Esophagus muscularis mucosa (tissue), 4 donors: ENCODE measurements at regions of chr17 and their contacts with region 1.

Region 1: DNA sequence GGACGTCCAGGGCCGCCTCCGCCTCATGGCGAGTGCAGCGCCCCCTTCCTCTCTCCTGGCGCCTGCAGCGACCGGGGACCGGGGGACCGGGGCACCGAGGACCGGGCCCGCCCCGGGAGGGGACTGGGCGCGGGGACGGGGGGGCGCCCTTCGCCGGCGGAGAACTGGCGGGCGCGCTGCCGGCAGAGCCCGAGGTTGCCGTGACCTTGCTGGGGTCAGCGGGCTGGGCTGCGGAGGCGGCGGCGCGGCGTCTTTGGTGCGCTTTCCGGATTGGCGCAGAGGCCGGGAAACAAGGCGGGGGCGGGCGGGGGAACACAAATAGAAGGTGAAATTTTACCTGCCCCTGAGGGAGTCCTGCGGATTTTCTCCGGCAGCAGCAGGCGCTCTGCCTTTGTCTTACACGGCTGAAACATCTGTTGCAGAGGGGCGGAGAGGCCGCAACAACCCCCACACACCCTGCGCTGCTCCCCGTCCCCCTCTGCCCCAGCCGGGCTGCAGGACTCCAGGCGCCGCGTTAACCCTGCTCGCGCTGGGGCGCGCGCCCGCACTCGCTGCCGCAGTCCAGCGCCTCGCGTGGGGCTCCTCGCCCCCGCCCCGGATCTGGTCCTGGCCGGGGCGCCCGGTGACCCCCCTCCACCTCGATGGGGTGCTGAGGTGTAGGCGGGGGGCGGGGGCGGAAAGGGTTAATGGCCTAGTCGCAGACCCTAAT is 53.5 kb downstream of the SREBF1 start:
- DNase-seq: no peak
- H3K4me3 ChIP-seq: peak overlapping the region; percentile 54 to 64 (median 61)
- H3K27ac ChIP-seq: peak overlapping the region; percentile 83 to 94 (median 92)
- H3K4me1 ChIP-seq: peaks cover 71 to 84% (median 80%) of the 10 kb centered on the region in 4 donors
- H3K27me3 ChIP-seq: no peaks in the 10 kb centered on the region
- CTCF ChIP-seq: peak in 2 of 3 experiments; percentile 22 to 23
- EP300 ChIP-seq: no peak
- POLR2A ChIP-seq: peak; percentile 3

Region 2: GRCh38 chr17:17041571-17042380 is 741.5 kb before region 1 on chr17:
- intact Hi-C with region 1: no loop called
- DNase-seq: peak; percentile 99
- H3K4me3 ChIP-seq: peak overlapping the region; percentile 59 to 85 (median 75)
- H3K27ac ChIP-seq: peak overlapping the region; percentile 76 to 80 (median 79)
- H3K4me1 ChIP-seq: peaks cover 36 to 50% (median 45%) of the 10 kb centered on the region in 4 donors
- H3K27me3 ChIP-seq: no peaks in the 10 kb centered on the region
- CTCF ChIP-seq: no peak
- EP300 ChIP-seq: no peak
- POLR2A ChIP-seq: no peak

Region 3: DNA sequence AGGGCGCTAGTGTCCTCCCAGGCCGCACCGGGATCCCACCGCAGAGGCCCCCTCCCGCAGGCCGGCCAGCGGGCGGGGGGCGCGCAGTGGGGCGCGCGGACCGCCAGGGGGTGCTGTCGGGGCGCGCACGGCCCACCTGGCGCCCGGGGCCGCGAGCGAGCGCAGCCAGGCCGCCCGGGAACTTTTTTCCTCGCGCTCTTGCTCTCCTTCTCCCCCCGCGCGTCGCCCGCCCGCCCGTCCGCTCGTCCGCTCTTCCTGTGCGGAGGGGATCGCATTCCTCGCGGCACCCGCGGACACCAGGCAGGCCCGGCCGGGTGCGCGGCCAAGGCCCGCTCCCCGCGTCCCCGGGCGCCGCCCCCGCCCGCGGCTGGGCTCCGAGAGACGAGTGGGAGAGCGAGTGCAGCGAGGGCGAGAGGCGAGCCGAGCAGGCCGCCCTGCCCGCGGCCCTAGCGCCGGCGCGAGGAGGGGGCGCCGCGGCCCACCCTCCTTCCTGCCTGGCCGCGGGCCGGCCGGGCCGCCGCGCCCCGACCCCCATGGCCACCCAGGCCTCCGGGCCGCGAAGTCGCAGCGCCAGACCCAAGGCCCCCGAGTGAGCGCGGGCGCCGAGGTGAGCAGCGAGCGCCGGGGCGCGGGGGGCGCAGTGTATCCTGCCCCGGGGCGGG is 102.0 kb before region 1 on chr17 and contains the start of gene RAI1:
- intact Hi-C with region 1: loop called (anchors 5 kb)
- DNase-seq: no peak
- H3K4me3 ChIP-seq: peak within 1 kb of the TSS; percentile 71 to 86 (median 84)
- H3K27ac ChIP-seq: peak within 1 kb of the TSS; percentile 96 to 99 (median 98)
- H3K4me1 ChIP-seq: peaks cover 29 to 49% (median 38%) of the 10 kb centered on the region in 4 donors
- H3K27me3 ChIP-seq: no peaks in the 10 kb centered on the region
- CTCF ChIP-seq: peak; percentile 77 to 99 (median 94)
- EP300 ChIP-seq: no peak
- POLR2A ChIP-seq: no peak
- total RNA-seq, gene RAI1: 18.7 to 41.3 (median 28.3) TPM

Region 4: DNA sequence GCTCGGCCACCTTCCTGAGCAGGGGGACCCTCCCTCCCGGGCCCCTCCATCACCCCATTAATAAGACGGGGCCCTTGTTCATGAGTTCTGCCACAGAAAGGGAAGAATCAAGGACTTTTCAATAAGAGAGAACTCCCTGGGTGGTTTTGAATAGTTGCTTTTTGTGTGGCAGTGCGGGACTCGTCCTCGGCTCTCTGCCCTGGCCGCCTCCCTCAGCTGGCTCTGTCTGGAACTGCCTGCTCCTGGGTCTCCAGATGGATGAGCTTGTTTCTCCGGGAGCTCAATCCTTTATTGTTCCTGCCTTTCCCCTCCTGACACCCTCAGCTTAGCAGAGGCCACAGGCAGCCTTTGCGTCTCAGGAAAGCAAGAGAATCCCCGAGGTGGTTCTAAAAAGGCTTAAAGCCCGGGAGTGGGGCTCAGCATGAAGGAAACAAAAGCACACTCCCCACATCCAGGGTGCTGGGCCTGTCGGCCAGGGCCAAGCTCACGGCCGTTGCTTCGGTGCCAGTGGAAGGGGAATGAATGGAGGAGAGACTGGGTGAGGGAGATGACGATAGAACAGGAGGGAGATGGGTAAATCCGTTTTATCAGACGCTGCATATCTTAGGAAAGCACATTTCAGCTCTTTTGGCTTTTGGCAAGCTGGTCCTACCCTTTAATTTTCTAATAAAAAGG is 41.8 kb before region 1 on chr17:
- intact Hi-C with region 1: loop called (anchors 1 kb)
- DNase-seq: no peak
- H3K4me3 ChIP-seq: peak overlapping the region in 1 of 4 donors; percentile 4
- H3K27ac ChIP-seq: peak overlapping the region; percentile 77 to 83 (median 82)
- H3K4me1 ChIP-seq: peaks cover 65 to 85% (median 76%) of the 10 kb centered on the region in 4 donors
- H3K27me3 ChIP-seq: no peaks in the 10 kb centered on the region
- CTCF ChIP-seq: peak in 2 of 3 experiments; percentile 19 to 60
- EP300 ChIP-seq: no peak
- POLR2A ChIP-seq: no peak